Heart right ventricle (tissue), 16 donors: ENCODE measurements at regions of chr5 and their contacts with region 1.

Region 1: DNA sequence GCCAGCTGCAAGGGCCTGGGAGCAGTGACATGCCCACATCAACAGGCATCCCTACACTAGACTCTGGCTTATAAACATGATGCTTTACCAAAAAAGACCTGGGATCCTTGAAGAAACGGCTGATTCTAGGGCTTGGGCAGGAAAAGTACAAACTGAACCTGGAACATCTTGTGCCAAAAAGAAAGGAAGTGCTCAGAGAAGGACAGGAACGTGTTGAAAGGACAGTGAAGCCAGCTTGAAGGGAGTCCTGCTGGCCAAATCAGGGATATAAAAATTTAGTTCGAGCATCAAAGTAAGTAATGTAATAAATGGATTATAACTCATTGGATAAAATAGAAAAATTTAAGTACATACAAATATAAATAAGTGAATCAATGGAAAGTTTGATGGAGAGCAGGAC is 58.1 kb downstream of the ALDH7A1 start:
- DNase-seq: no peak
- ATAC-seq: peak in 1 of 8 donors; percentile 16
- H3K4me3 ChIP-seq: no peak overlapping the region
- H3K27ac ChIP-seq: no peak overlapping the region
- H3K4me1 ChIP-seq: peaks cover 0 to 12% (median 9%) of the 10 kb centered on the region in 9 donors
- H3K27me3 ChIP-seq: no peaks in the 10 kb centered on the region
- CTCF ChIP-seq: no peak

Region 2: DNA sequence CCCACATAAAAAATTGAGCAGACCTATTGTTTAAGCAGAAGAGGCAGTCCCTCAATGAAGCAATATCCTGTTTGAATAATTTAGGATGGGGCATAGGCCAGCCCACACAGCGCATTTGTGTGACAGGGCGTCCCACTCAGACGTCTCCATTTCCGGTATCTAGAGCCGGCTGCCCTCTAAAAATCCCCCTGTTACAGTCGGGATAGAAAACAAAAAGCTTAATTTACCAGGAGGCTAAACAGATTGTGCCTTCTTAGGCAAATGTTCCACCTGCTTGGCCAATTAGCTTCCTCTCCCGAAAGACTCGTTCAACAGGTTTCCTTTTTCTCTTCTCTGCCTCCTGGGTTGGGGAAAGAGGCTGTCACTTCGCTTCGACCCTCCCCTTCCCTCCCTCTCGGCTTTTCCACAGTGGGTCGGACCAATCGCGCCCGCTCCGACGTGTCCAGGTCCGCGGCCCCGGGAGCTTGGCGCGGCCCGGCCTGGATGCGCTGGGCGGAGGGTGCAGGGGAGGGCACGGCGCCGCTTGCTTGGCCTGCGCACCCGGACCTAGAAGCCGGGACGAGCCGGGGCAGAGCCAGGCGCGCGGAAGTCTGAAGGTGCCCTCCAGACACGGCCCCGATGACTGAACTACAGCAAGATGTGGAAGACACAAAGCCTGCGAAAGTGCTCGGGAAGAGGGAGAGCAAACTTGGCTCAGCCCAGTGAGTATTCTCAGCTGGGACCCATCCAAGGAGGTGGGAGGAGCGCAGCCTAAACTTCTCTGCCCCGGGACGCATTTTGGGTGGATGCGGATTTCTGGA is 113.7 kb before region 1 on chr5 and contains the start of gene GRAMD2B:
- intact Hi-C with region 1: loop called in 2 of 10 experiments (anchors 5 kb)
- DNase-seq: peak; percentile 86 to 89
- ATAC-seq: peak; percentile 96 to 99 (median 98)
- H3K4me3 ChIP-seq: peak within 1 kb of the TSS; percentile 56 to 88 (median 65)
- H3K27ac ChIP-seq: peak within 1 kb of the TSS; percentile 87 to 97 (median 94)
- H3K4me1 ChIP-seq: peaks cover 0 to 35% (median 23%) of the 10 kb centered on the region in 9 donors
- H3K27me3 ChIP-seq: no peaks in the 10 kb centered on the region
- CTCF ChIP-seq: no peak
- total RNA-seq, gene GRAMD2B: 29.1 to 47.3 (median 35.3) TPM

Region 3: GRCh38 chr5:126490167-126490940 is 46.5 kb before region 1 on chr5:
- intact Hi-C with region 1: loop called in 3 of 10 experiments (anchors 5 to 10 kb)
- DNase-seq: no peak
- ATAC-seq: peak in 2 of 8 donors; percentile 38 to 53
- H3K4me3 ChIP-seq: no peak overlapping the region
- H3K27ac ChIP-seq: peak overlapping the region in 1 of 10 donors; percentile 15
- H3K4me1 ChIP-seq: peaks cover 0 to 23% (median 3%) of the 10 kb centered on the region in 9 donors
- H3K27me3 ChIP-seq: no peaks in the 10 kb centered on the region
- CTCF ChIP-seq: no peak

Region 4: GRCh38 chr5:126499853-126500342 is 37.0 kb before region 1 on chr5:
- intact Hi-C with region 1: loop called in 5 of 10 experiments (anchors 5 kb)
- DNase-seq: no peak
- ATAC-seq: no peak
- H3K4me3 ChIP-seq: no peak overlapping the region
- H3K27ac ChIP-seq: no peak overlapping the region
- H3K4me1 ChIP-seq: peaks cover 0 to 20% (median 15%) of the 10 kb centered on the region in 9 donors
- H3K27me3 ChIP-seq: no peaks in the 10 kb centered on the region
- CTCF ChIP-seq: peak; percentile 30 to 61 (median 51)